ENCODE measurements at regions of chr2 and their contacts with region 1.

Region 1: GRCh38 chr2:231270221-231271114 is 72.0 kb downstream of the ARMC9 start:
- DNase-seq: no peak
- ATAC-seq: no peak
- H3K4me3 ChIP-seq: no peak overlapping the region
- H3K4me1 ChIP-seq: no peaks in the 10 kb centered on the region
- CTCF ChIP-seq: no peak

Region 2: DNA sequence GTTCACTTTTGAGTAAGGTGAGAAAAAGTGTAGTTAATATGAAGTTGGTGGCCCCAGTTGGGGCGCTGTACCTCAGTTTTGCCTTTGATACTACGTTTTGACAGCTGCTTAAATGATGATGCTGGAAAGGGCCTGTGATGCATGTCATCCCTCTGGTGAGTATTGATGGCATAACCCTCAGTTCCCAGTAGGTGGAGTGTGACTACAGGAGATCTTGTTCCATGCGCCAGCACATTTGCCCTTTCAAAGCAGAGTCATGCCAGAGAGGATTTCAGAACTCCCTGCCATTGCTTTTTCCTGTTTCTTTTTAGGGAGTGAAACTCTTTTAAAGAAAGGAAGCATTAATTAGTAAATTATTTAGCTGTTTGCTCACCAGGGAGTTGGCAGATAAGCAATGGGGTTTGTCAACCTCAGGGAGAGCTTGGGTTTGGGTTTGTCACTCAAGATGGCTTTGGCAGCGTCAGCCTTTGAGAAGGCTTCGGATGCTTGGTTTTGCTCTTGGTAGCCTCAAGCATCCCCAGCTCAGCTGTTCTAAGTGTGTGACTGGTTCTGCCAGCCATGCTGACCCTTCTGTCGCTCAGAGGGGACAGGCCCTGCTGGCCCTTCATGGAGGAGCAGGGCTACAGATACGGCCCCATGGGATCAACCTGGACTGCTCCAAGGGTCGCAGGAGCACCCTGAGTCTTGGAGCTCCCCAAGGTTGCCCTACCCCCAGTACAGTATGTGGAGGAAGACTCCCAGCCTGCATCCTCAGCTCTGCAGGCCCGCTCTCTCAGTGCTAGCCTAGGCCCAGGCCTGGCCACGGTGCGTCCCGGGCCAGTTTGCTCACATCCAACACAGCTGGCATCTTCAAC is 42.9 kb before region 1 on chr2:
- intact Hi-C with region 1: loop called in 1 of 2 experiments (anchors 10 kb)
- DNase-seq: peak in 1 of 3 donors; percentile 81
- ATAC-seq: peak; percentile 96
- H3K4me3 ChIP-seq: no peak overlapping the region
- H3K4me1 ChIP-seq: peaks cover 16% of the 10 kb centered on the region
- CTCF ChIP-seq: peak; percentile 53

Measured in mucosa of descending colon (tissue), 3 donors.